ENCODE measurements at regions of chr16 and their contacts with region 1.

Region 1: DNA sequence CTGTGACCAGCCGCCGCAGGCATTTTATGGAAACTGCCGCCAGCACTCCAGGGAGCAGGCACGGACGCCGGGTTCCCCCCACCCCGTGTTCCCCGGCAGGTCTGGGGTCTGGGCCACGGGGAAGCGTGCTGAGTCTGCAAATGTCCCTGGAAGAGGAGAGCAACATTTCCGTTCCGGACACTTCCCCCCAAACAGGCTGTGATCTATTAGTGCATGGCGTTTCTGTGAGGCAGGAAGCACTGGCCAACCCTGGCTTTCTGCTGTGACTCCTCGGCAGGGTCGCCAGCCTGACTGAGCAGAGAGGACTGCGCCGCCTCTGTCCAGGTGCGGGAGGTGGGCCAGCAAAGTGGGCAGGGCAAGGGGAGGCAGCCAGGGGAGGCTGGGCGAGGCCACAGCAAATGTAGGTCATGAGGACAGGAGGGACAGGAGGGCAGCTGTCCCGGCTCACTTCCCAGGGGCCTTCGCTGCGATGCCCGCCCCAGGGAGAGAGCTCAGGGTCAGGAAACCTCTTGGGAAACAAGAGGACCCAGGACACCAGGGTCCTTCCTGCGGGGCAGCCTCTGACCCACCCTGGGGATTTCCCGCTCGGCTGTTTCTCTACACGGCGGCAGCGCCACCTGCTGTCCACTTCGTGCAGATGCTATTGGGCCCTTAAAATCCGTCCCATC is 9.5 kb downstream of the FOXF1 start:
- DNase-seq: peak; percentile 83
- CTCF ChIP-seq: peak; percentile 77

Region 2: GRCh38 chr16:85799497-85800337 is 720.1 kb before region 1 on chr16 and contains the starts of genes COX4I1 and EMC8:
- in situ Hi-C with region 1: loop called (anchors 25 kb)
- DNase-seq: peak; percentile 98
- CTCF ChIP-seq: no peak

Region 3: GRCh38 chr16:86074651-86075487 is 444.9 kb before region 1 on chr16:
- in situ Hi-C with region 1: loop called (anchors 25 kb)
- DNase-seq: no peak
- CTCF ChIP-seq: no peak

Region 4: GRCh38 chr16:86343027-86343787 is 176.6 kb before region 1 on chr16:
- in situ Hi-C with region 1: loop called (anchors 25 kb)
- DNase-seq: no peak
- CTCF ChIP-seq: no peak

Region 5: DNA sequence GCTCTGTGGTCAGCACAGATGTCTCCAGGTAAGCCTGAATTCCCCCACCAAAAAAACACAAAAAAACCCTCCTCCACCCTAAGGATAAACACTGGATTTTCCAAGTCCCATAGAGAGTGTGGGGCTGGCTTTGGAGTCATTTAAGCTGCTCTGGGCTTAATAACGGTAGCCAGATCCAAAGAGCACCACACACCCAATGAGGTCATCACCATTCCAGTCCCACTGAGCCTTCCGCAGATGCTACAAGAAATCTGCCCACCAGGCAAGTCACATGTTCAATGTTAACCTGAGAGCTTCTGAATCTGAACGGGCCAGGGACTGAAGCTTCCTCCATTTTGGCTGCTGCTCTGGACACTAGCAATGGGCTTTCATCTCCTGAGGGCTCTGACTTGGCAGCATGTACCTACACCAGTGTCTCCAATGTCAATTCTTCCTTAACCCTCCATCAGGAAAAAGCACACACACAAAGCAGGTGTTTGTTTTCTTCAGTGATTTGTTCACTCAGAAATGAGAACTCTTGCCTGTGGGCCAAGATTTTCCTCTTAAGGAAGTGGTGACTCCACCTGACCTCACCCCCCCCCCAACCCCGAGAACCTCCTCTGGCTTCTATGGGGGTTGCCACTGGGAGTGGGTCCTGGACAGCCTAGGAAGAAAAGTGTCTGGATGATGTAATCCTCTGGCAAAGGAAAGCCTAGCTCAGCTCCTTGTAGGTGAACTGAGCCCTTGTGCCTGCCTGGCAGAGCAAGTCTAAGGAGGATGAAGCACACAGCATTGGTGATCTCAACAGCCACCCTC is 278.7 kb after region 1 on chr16:
- in situ Hi-C with region 1: no loop called
- DNase-seq: no peak
- CTCF ChIP-seq: no peak

Region 6: GRCh38 chr16:86819533-86819892 is 299.7 kb after region 1 on chr16:
- in situ Hi-C with region 1: no loop called
- DNase-seq: no peak
- CTCF ChIP-seq: no peak